ENCODE measurements at regions of chr22 and their contacts with region 1.

Region 1: GRCh38 chr22:46013460-46014416 is 36.8 kb upstream of the WNT7B start:
- DNase-seq: peak; percentile 89
- ATAC-seq: peak; percentile 79
- H3K4me3 Mint-ChIP-seq: peak overlapping the region; percentile 76
- H3K27ac Mint-ChIP-seq: peak overlapping the region; percentile 65; the same call in 1 of the 2 replicates
- H3K4me1 Mint-ChIP-seq: peaks cover 8% of the 10 kb centered on the region; the same call in 1 of the 2 replicates
- H3K27me3 Mint-ChIP-seq: no peaks in the 10 kb centered on the region
- CTCF ChIP-seq: peak; percentile 66

Region 2: GRCh38 chr22:46027192-46028105 is 13.7 kb after region 1 on chr22:
- CTCF ChIA-PET with region 1: interaction called, 14 read pairs
- POLR2A ChIA-PET with region 1: no interaction called
- DNase-seq: peak; percentile 48
- ATAC-seq: peak; percentile 11
- H3K4me3 Mint-ChIP-seq: peak overlapping the region; percentile 76
- H3K27ac Mint-ChIP-seq: no peak overlapping the region
- H3K4me1 Mint-ChIP-seq: peaks cover 31% of the 10 kb centered on the region
- H3K27me3 Mint-ChIP-seq: peaks cover 47% of the 10 kb centered on the region
- CTCF ChIP-seq: no peak

Region 3: DNA sequence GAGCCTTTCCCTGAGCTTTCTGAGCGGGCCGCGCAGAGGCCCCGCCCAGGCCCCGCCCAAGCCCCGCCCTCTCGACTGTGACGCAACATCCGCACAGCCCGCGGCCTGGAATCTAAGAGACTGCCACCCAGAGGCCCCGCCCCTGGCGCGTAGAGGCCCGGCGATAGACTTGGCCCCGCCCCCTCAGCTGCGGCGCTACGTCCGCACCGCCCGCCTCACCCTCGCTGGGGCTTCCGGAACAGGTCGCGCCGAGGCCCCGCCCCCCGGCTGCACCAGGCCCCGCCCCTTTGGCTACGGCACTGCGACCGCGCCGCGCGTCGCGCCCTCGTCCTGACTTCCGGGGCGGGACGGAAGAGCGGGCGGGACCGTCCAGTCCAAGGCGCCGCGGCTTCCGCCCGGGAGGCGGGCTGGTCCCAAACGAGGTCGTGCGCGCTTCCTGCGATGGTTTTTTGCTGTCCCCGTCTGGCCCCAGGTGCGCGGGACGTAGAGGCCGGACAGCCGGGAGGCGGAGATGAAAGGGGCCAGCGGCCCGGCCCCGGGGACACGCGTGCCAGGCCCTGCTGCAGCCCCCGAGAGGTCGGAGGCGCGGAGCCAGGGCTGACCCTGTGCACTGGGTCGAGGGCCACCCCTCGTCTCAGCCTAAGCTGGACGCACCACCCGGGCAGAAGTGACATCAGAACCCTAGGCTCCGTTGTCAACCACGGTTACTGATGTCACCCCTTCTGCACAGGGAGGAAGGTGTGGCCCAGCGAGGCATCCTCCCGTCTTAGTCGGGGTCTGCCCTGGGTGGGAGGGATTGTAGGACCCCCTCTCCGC is 22.2 kb after region 1 on chr22:
- CTCF ChIA-PET with region 1: interaction called, 36 read pairs
- POLR2A ChIA-PET with region 1: interaction called, 7 read pairs
- DNase-seq: peak; percentile 100
- ATAC-seq: peak; percentile 95
- H3K4me3 Mint-ChIP-seq: peak overlapping the region; percentile 73
- H3K27ac Mint-ChIP-seq: no peak overlapping the region
- H3K4me1 Mint-ChIP-seq: peaks cover 34% of the 10 kb centered on the region
- H3K27me3 Mint-ChIP-seq: no peaks in the 10 kb centered on the region
- CTCF ChIP-seq: no peak

Region 4: GRCh38 chr22:46044621-46045438 is 31.1 kb after region 1 on chr22:
- CTCF ChIA-PET with region 1: interaction called, 16 read pairs
- POLR2A ChIA-PET with region 1: no interaction called
- DNase-seq: peak; percentile 56
- ATAC-seq: peak; percentile 68
- H3K4me3 Mint-ChIP-seq: peak overlapping the region; percentile 64
- H3K27ac Mint-ChIP-seq: no peak overlapping the region
- H3K4me1 Mint-ChIP-seq: peaks cover 14% of the 10 kb centered on the region
- H3K27me3 Mint-ChIP-seq: peaks cover 36% of the 10 kb centered on the region
- CTCF ChIP-seq: no peak

Region 5: GRCh38 chr22:46116491-46116958 is 102.8 kb after region 1 on chr22:
- CTCF ChIA-PET with region 1: interaction called, 27 read pairs
- POLR2A ChIA-PET with region 1: no interaction called
- DNase-seq: peak; percentile 94
- ATAC-seq: peak; percentile 86
- H3K4me3 Mint-ChIP-seq: no peak overlapping the region
- H3K27ac Mint-ChIP-seq: no peak overlapping the region
- H3K4me1 Mint-ChIP-seq: peaks cover 3% of the 10 kb centered on the region; the same call in 1 of the 2 replicates
- H3K27me3 Mint-ChIP-seq: no peaks in the 10 kb centered on the region
- CTCF ChIP-seq: peak; percentile 49; the same call in 1 of the 2 replicates

Region 6: GRCh38 chr22:46122511-46122971 is 108.8 kb after region 1 on chr22:
- CTCF ChIA-PET with region 1: interaction called, 27 read pairs
- POLR2A ChIA-PET with region 1: no interaction called
- DNase-seq: peak; percentile 77
- ATAC-seq: peak; percentile 77
- H3K4me3 Mint-ChIP-seq: no peak overlapping the region
- H3K27ac Mint-ChIP-seq: no peak overlapping the region
- H3K4me1 Mint-ChIP-seq: no peaks in the 10 kb centered on the region
- H3K27me3 Mint-ChIP-seq: no peaks in the 10 kb centered on the region
- CTCF ChIP-seq: peak; percentile 90

Region 7: DNA sequence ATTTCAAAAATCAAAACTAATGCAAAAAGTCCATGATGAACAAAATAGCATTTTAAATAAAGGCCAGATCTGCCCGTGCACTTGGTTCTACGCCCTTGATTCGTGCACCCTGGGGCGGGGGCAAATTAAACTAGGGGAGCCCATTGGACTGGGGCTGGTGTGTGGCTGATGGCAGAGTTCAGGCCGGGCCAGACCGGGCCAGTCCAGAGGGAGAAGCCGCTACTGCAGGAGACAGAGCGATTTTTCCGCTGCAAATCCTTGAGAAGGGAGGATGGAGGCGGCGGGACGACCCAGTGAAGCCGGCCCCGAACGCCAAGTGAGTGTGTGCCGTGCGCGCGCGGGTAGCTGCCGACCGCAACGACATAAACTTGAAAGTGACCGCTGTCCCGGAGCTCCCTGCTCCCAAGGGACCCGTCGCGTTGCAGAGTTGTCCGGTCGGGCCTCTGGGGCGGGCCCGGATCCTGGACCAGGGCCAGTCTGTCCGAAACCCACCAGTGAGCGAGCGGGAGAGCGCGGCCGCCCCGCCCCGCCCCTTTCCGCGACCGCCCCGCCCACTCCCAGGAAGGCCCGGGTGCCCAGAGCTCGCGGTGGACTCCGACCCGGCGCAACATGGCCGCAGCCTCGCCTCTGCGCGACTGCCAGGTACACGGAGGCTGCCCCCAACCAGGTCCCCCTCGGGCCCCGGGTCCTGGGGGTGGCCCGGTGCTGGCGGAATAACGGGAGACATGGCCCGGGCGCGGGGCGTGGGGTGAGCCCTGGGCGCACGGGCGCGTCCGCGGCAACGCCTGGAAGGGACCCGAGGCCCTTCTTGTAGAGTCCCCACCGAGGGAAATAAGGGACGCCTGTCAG is 253.9 kb after region 1 on chr22 and contains the start of gene TTC38:
- CTCF ChIA-PET with region 1: no interaction called
- POLR2A ChIA-PET with region 1: no interaction called
- DNase-seq: peak; percentile 70
- ATAC-seq: peak; percentile 85
- H3K4me3 Mint-ChIP-seq: peak within 1 kb of the TSS; percentile 86
- H3K27ac Mint-ChIP-seq: no peak within 1 kb of the TSS
- H3K4me1 Mint-ChIP-seq: peaks cover 8% of the 10 kb centered on the region
- H3K27me3 Mint-ChIP-seq: peaks cover 46% of the 10 kb centered on the region
- CTCF ChIP-seq: no peak
- total RNA-seq, gene TTC38: 20.7 to 29.2 TPM (median 27.5 TPM) in 3 replicates